WTC11 (cell line): ENCODE measurements at regions of chr12 and their contacts with region 1.

Region 1: GRCh38 chr12:121499929-121500793 is 80.7 kb downstream of the KDM2B start:
- DNase-seq: peak; percentile 79
- ATAC-seq: peak; percentile 77
- H3K4me3 Mint-ChIP-seq: no peak overlapping the region
- H3K27ac Mint-ChIP-seq: peak overlapping the region; percentile 85
- H3K4me1 Mint-ChIP-seq: peaks cover 8% of the 10 kb centered on the region
- H3K27me3 Mint-ChIP-seq: no peaks in the 10 kb centered on the region
- CTCF ChIP-seq: peak; percentile 96

Region 2: GRCh38 chr12:121513464-121514183 is 13.5 kb after region 1 on chr12:
- CTCF ChIA-PET with region 1: interaction called, 11 read pairs
- POLR2A ChIA-PET with region 1: no interaction called
- DNase-seq: peak; percentile 79
- ATAC-seq: peak; percentile 99
- H3K4me3 Mint-ChIP-seq: no peak overlapping the region
- H3K27ac Mint-ChIP-seq: peak overlapping the region; percentile 83
- H3K4me1 Mint-ChIP-seq: peaks cover 17% of the 10 kb centered on the region
- H3K27me3 Mint-ChIP-seq: no peaks in the 10 kb centered on the region
- CTCF ChIP-seq: no peak

Region 3: GRCh38 chr12:121697098-121697698 is 197.0 kb after region 1 on chr12:
- CTCF ChIA-PET with region 1: no interaction called
- POLR2A ChIA-PET with region 1: no interaction called
- DNase-seq: no peak
- ATAC-seq: no peak
- H3K4me3 Mint-ChIP-seq: no peak overlapping the region
- H3K27ac Mint-ChIP-seq: no peak overlapping the region
- H3K4me1 Mint-ChIP-seq: no peaks in the 10 kb centered on the region
- H3K27me3 Mint-ChIP-seq: no peaks in the 10 kb centered on the region
- CTCF ChIP-seq: peak; percentile 25; the same call in 1 of the 2 replicates